Posterior vena cava (tissue), 2 donors: ENCODE measurements at regions of chr10 and their contacts with region 1.

Region 1: DNA sequence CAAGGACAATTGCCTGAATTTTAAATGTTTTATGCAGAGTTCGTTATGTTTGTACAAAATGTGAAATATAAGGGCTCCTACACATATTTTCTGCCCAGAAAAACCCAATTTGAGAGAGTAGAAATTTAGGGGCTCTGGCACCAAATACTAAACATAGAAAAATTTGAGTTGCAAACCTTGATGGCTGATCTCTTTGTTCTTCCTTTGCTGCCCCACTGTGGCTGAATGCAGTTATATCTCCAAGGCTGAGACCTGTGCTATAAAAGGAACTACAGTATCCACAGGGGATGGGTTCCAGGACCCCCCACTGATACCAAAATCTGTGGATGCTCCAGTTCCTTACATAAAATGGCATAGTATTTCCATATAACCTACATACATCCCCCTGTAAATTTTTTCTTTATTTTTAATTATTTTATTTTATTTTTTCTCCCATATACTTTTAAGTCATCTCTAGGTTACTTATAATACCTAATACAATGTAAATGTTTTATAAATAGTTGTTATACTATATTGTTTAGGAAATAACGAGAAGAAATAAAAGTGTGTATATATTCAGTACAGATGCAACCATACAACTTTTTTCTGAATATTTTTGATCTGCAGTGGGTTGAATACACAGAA is 22.5 kb downstream of the CFAP43 start:
- DNase-seq: no peak

Region 2: DNA sequence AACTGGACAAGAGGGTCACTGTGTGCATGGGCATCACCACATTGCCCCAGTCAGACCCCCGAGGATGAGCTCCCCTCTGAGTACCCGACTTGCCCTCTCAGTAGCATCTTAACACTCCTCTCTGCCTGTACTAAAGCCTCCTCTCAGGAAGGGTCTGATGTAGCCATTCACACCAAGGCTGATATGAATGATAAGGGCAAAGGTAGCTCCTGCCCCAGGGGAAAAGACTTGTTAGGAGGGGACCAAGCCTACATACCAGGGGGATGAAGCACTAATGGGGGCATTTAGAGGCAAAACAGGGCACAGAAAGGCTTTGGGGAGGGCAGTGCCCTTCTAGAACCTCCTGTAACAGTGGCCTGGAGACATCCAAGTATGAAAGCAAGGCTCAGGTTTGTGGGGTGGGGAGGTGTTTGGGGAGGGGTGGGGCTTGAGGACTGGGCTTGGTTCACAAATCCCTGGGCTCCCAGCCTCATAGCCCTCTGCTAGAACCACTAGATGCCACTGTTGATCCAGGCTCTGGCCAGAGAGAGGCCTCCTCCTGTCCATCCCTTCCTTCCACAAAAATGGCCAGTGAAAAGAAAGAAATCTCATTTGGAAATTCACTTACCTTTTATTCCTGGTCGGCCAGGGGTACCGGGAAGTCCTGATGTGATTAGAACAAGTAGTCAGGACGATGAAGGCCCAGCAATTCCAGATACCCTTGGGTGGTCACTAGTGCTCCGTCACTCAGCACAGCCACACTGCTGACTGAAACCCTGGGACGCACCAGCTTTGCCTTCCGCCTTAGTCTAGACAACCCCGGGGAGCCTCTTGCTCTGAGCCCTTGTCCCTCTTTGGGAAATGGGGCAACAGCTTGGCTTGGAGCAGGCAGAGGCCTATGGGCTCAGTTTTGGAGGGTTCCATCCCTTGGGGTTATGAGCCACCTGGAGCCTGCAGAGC is 164.3 kb before region 1 on chr10:
- intact Hi-C with region 1: loop called in 1 of 2 experiments (anchors 10 kb)
- DNase-seq: no peak

Region 3: DNA sequence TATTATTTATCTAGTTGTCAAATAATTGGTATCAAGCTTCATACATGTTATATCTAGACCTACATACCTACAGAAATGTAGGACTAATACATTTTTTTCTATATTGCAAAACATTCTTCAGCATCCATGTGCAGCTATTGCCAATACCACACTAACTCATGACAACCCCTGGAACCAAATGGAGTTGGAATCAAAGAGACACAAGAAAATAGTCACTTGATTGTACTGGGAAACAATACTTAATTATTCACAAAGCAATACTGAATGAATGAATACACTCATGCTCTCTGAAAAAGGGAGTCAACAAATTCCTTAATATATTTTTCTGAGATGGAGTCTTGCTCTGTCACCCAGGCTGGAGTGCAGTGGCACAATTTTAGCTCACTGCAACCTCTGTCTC is 32.9 kb after region 1 on chr10:
- intact Hi-C with region 1: no loop called
- DNase-seq: no peak